ENCODE measurements at regions of chr19 and their contacts with region 1.

Region 1: GRCh38 chr19:56314562-56315077 is at the start of gene ZSCAN5A:
- DNase-seq: peak; percentile 96 to 98
- H3K4me3 ChIP-seq: peak within 1 kb of the TSS; percentile 58 to 63
- H3K27ac ChIP-seq: peak within 1 kb of the TSS; percentile 87 to 91
- H3K4me1 ChIP-seq: peaks cover 0 to 15% (median 10%) of the 10 kb centered on the region in 4 donors
- H3K27me3 ChIP-seq: no peaks in the 10 kb centered on the region
- CTCF ChIP-seq: no peak

Region 2: DNA sequence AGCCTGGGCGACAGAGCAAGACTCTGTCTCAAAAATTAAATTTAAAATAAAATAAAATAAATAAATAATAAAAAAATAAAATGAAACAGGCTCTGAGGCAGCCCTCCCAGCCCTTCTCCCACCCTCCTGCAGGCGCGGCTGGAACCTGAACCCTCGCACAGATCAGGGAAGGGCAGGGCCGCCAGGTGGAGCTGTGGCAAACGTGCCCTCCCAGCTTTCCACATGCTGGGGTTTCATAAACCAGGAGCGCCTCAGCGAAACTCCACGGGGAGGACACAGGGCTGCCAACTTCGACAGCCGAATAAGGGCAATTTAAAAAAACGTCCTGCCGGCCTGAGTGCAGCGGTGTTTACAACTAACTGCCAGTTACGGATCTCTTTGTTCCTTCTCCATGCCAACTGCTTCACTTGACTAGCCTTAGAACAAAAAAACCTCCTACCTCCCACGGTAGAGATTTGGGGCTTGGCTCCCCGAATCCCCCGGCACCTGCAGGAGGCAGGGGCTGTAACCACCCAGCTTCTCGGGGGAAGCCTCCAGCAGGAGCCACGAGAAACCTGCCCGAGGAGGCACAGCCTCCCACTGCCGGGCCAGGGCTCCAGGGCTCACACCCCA is 209.4 kb before region 1 on chr19:
- intact Hi-C with region 1: loop called (anchors 10 kb)
- DNase-seq: peak; percentile 79 to 93
- H3K4me3 ChIP-seq: peak overlapping the region; percentile 26 to 45
- H3K27ac ChIP-seq: peak overlapping the region; percentile 86 to 93
- H3K4me1 ChIP-seq: peaks cover 0 to 57% (median 46%) of the 10 kb centered on the region in 4 donors
- H3K27me3 ChIP-seq: no peaks in the 10 kb centered on the region
- CTCF ChIP-seq: peak; percentile 78 to 87

Region 3: DNA sequence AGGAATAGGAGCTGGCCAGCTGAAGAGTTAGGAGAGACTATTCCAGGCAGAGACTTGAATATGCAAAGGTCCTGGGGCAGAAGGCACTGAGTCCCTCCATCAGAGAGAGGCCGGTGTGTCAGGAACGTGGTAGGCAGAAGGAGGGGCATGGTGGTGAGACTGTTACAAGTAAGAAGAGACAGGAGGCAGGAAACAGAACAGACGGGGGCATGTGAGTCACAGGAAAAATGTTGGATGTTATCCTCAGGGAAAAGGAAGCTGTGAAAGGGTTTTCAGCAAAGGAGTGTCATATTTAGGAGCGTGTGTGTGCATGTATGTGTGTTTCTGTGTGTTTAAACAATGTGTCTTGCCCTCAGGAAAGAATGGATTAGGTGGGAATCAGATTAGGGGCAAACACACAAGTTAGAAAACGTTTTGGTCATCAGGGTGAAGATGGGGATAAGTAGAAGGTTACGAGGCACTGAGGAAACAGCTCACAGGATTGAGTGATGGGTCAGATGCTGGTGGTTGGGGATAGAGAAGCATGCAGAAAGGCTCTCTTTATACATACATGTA is 41.0 kb before region 1 on chr19:
- intact Hi-C with region 1: no loop called
- DNase-seq: no peak
- H3K4me3 ChIP-seq: no peak overlapping the region
- H3K27ac ChIP-seq: no peak overlapping the region
- H3K4me1 ChIP-seq: no peaks in the 10 kb centered on the region
- H3K27me3 ChIP-seq: no peaks in the 10 kb centered on the region
- CTCF ChIP-seq: no peak

Region 4: DNA sequence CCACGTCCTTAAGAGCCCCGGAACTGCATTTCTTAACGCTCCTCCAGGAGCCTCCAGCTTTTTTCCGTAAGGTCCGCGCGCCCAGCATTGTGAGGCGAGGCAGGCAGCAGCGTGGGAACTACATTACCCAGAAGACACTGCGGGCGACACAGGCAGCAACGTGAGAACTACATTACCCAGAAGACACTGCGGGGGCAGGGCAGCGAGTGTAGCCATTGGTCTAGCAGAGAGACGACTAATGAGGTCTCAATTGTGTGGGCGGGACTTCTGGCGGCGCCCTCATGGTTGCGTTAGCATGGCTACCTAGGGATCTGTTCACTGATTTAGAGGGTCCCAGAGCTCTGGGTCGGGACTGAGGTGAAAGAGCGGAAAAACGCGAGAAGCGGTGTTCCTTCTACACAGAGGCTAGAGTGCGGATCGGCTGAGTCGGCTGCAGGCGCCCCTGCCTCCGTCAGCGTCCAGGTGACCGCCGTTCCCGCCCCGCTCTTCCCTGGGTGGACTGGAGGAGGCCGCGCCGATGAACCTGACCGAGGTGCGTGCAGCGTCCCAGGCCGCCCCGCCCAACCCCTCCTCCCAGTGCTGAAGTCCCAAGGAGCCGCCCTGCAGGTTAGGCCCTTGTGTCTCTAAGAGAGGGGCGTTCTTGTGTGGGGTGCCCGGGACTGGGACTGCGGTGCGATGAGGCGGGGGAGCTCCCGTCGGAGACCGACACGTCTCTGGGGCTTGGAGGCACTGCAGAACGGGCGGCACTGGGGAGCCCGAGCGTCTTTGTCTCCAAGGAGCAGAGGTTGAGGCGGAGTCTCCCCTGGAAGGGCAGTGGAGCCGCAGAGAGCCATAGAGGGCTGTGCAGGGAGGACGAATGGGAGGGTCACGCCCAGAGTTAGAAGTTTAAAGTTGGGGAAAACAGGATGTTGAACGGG is 1120.7 kb after region 1 on chr19 and contains the start of gene ZNF749:
- intact Hi-C with region 1: loop called (anchors 5 kb)
- DNase-seq: peak; percentile 99 to 100
- H3K4me3 ChIP-seq: peak within 1 kb of the TSS; percentile 75 to 85
- H3K27ac ChIP-seq: peak within 1 kb of the TSS; percentile 61 to 70
- H3K4me1 ChIP-seq: peaks cover 0 to 20% (median 11%) of the 10 kb centered on the region in 4 donors
- H3K27me3 ChIP-seq: no peaks in the 10 kb centered on the region
- CTCF ChIP-seq: no peak

Measured in tibial artery (tissue), 4 donors.